GM13977 (cell line): ENCODE measurements at regions of chr1 and their contacts with region 1.

Region 1: DNA sequence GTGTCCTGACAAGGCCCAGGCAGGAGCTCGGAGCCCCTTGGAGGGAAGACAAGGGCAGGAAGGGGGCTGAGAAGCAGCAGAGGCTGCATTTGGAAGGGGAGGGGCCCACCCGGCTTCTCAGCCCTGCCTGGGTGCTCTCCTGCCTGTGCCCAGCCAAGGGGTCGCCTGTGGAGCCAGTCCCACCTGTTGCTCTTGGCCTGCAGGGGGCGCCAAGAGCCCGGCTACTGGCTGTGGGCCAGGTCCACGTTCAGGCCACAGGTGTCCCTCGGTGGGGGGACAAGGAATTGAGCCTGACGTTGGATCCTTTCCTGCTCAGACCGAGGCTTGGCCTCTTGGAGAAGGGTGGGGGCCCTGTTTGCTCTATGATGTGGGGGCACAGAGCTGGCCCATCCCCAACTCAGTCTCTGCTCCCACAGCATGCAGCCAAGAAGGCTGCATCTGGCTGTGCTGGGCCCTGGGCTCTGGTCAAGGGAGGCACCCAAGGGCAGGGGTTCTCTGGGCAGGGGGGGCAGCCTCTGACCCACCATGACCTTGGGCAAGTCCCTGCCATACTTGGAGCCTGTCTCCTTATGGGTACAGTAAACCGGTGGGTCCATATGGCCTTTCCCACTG is 10.9 kb downstream of the WNT4 start:
- DNase-seq: peak; percentile 90
- CTCF ChIP-seq: peak; percentile 96

Region 2: DNA sequence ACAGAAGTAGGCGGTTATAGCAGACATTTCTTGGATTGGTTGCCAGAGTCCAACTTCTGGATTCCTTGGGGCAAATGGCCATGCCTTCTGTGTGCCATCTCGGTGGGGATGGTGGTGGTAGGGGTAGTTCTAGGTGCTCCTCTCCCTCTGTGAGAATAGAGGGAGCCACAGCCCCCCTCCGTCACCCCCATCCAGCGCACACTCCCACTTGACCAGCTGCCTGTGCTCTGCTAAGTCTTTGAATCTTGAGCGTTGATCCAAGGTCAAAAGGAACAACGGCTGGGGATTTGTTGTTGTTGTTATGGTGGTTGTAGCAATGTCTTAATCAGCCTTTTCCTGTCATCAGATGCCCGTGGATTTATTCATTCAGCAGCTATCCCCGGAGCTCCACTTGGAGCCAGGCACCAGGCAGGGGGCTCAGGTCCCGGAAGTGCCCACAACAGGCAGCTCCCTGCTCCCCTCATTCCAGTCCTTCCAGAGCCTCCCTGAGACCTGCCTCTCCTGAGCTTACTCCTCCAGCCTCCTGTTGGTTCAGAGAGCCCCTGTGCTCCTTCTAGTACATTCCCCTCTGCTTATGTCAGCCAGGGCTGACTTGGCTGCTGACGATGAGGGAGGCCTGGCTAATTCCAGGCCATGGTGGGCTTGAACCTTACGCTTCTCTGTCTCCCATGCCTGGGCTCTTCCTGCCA is 157.5 kb after region 1 on chr1:
- in situ Hi-C with region 1: loop called (anchors 10 kb)
- DNase-seq: no peak
- CTCF ChIP-seq: no peak

Region 3: GRCh38 chr1:22641906-22642636 is 510.1 kb after region 1 on chr1:
- in situ Hi-C with region 1: loop called (anchors 25 kb)
- DNase-seq: peak; percentile 86
- CTCF ChIP-seq: peak; percentile 92